SK-N-SH (cell line): ENCODE measurements at regions of chr19 and their contacts with region 1.

Region 1: DNA sequence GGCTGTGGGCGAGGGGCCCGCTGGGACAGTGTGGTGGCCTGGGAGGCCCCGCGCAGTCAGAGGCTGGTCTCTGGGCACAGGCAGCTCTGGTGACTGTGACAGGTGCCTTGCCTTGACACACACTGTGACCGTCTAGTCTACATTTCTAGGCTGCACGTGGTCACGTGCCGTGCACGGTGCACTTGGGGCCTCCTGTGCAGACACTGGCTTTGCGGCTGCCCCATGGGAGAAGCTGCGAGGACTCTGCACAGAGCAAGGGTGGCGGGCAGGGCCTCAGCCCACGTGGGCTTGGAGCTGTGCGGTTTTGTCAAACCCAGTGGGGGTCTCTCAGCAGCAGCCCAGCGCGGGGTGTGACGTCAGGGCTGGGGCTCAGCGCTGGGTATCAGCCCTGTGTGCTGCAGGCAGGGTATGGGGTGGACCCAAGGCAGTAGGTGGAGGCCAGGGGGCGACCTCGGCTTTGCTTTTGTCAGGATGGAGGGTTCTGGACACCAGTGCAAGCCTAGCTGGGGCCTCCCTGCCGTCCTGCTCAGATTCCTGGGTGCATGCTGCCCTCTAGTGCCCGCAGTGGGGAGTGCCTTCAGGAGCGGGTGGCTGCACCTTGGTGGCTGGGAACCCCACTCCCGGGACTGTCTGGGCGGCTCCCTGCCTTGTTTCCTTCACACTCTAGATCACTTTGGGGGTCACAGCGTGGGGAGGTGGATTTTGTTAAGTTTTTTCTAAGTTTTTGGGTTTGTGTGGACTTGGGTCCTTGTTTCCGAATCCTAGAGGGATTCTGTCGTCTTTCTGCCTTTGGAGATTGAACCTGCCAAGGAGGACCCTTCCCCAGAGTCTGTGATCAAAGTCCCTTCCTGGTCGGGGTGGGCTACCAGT is 62.6 kb downstream of the KDM4B start:
- DNase-seq: peak; percentile 97
- H3K4me3 ChIP-seq: peak overlapping the region in 1 of 2 experiments; percentile 42; a peak in 1 of 4 replicates
- H3K27ac ChIP-seq: no peak overlapping the region; a peak in 1 of 4 replicates
- H3K4me1 ChIP-seq: peaks cover 3 to 16% of the 10 kb centered on the region in 2 experiments; a peak in 2 of 4 replicates
- H3K27me3 ChIP-seq: no peaks in the 10 kb centered on the region
- CTCF ChIP-seq: peak; percentile 93
- EP300 ChIP-seq: no peak
- RAD21 ChIP-seq: peak; percentile 95

Region 2: GRCh38 chr19:4815426-4816201 is 215.9 kb before region 1 on chr19:
- CTCF ChIA-PET with region 1: interaction called, 39 read pairs
- POLR2A ChIA-PET with region 1: no interaction called
- DNase-seq: peak; percentile 97
- H3K4me3 ChIP-seq: peak overlapping the region in 1 of 2 experiments; percentile 27; a peak in 1 of 4 replicates
- H3K27ac ChIP-seq: peak overlapping the region; percentile 48 to 56; a peak in 3 of 4 replicates
- H3K4me1 ChIP-seq: peaks cover 3 to 7% of the 10 kb centered on the region in 2 experiments; a peak in 2 of 4 replicates
- H3K27me3 ChIP-seq: no peaks in the 10 kb centered on the region
- CTCF ChIP-seq: no peak
- EP300 ChIP-seq: no peak
- RAD21 ChIP-seq: no peak

Region 3: GRCh38 chr19:4877753-4878490 is 153.5 kb before region 1 on chr19:
- CTCF ChIA-PET with region 1: interaction called, 50 read pairs
- POLR2A ChIA-PET with region 1: no interaction called
- DNase-seq: peak; percentile 57
- H3K4me3 ChIP-seq: no peak overlapping the region
- H3K27ac ChIP-seq: no peak overlapping the region
- H3K4me1 ChIP-seq: no peaks in the 10 kb centered on the region; a peak in 1 of 4 replicates
- H3K27me3 ChIP-seq: no peaks in the 10 kb centered on the region
- CTCF ChIP-seq: no peak
- EP300 ChIP-seq: no peak
- RAD21 ChIP-seq: no peak

Region 4: GRCh38 chr19:4968462-4969291 is 62.8 kb before region 1 on chr19 and contains the start of gene KDM4B:
- CTCF ChIA-PET with region 1: interaction called, 62 read pairs
- POLR2A ChIA-PET with region 1: interaction called, 4 read pairs
- DNase-seq: peak; percentile 99
- H3K4me3 ChIP-seq: peak within 1 kb of the TSS; percentile 68 to 84
- H3K27ac ChIP-seq: peak within 1 kb of the TSS; percentile 19 to 71; a peak in 2 of 4 replicates
- H3K4me1 ChIP-seq: peaks cover 16 to 32% of the 10 kb centered on the region in 2 experiments; a peak in 3 of 4 replicates
- H3K27me3 ChIP-seq: no peaks in the 10 kb centered on the region
- CTCF ChIP-seq: no peak
- EP300 ChIP-seq: no peak
- RAD21 ChIP-seq: no peak
- polyA plus RNA-seq, gene KDM4B: 10.0 and 12.2 TPM in 2 replicates

Region 5: GRCh38 chr19:5001615-5002014 is 29.9 kb before region 1 on chr19:
- CTCF ChIA-PET with region 1: interaction called, 29 read pairs
- POLR2A ChIA-PET with region 1: no interaction called
- DNase-seq: peak; percentile 69
- H3K4me3 ChIP-seq: no peak overlapping the region
- H3K27ac ChIP-seq: peak overlapping the region in 1 of 2 experiments; percentile 53; a peak in 2 of 4 replicates
- H3K4me1 ChIP-seq: peaks cover 0 to 9% of the 10 kb centered on the region in 2 experiments; a peak in 1 of 4 replicates
- H3K27me3 ChIP-seq: no peaks in the 10 kb centered on the region
- CTCF ChIP-seq: peak; percentile 76
- EP300 ChIP-seq: no peak
- RAD21 ChIP-seq: peak; percentile 43

Region 6: GRCh38 chr19:5068233-5069072 is 37.0 kb after region 1 on chr19:
- CTCF ChIA-PET with region 1: no interaction called
- POLR2A ChIA-PET with region 1: no interaction called
- DNase-seq: no peak
- H3K4me3 ChIP-seq: no peak overlapping the region
- H3K27ac ChIP-seq: no peak overlapping the region
- H3K4me1 ChIP-seq: peaks cover 0 to 8% of the 10 kb centered on the region in 2 experiments; a peak in 1 of 4 replicates
- H3K27me3 ChIP-seq: no peaks in the 10 kb centered on the region
- CTCF ChIP-seq: no peak
- EP300 ChIP-seq: no peak
- RAD21 ChIP-seq: no peak

Region 7: GRCh38 chr19:5281588-5281987 is 250.1 kb after region 1 on chr19:
- CTCF ChIA-PET with region 1: no interaction called
- POLR2A ChIA-PET with region 1: no interaction called
- DNase-seq: peak; percentile 15
- H3K4me3 ChIP-seq: no peak overlapping the region
- H3K27ac ChIP-seq: no peak overlapping the region
- H3K4me1 ChIP-seq: no peaks in the 10 kb centered on the region
- H3K27me3 ChIP-seq: no peaks in the 10 kb centered on the region
- CTCF ChIP-seq: no peak
- EP300 ChIP-seq: no peak
- RAD21 ChIP-seq: no peak